MCF 10A (cell line): ENCODE measurements at regions of chr3 and their contacts with region 1.

Region 1: DNA sequence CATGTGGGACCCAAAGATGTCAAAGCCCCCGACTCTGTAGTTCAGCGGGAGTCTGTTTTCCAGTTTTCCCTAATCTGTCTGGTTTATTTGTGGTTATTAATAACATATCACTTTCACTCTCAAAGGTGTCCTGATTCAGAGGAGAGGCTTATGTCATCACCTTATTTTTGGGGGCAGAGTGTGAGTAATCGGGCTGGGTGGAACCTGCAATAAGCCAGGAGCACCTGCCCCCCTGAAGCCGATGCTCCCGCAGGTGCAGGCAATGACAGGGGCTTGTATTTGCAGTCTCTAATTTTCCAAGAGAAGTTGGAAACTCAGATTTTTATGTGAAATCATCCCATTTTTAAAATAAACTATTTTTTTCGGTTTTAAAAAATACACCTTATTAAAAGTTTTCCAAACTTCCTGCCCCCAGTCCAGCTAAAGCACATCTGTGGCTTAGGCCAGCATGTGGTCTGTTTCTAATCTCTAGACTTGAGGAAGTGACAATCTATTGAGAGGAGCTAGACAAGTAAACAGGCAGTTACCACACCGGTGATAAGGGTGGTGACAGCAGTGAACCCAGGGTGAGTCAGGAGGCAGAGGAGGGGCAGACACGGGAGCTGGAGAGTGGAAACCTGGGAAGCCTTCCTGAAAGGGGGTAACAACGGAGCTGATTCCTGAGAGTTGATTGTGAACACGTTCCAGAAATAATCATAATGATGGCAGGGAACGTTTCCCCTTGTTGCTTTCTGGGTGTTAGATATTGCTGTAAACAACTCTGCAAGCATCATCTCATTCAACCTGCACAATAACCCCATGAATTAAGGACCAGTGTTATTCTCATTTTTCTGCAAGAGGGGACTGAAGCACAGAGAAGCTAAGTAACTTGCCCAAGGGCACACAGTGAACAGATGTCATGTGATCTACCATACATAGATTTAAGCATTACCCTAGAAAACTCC is 37.3 kb downstream of the BHLHE40 start:
- DNase-seq: peak; percentile 59
- H3K4me3 Mint-ChIP-seq: no peak overlapping the region
- H3K27ac Mint-ChIP-seq: peak overlapping the region; percentile 76
- H3K4me1 Mint-ChIP-seq: peaks cover 55% of the 10 kb centered on the region
- H3K27me3 Mint-ChIP-seq: no peaks in the 10 kb centered on the region
- CTCF ChIP-seq: no peak

Region 2: DNA sequence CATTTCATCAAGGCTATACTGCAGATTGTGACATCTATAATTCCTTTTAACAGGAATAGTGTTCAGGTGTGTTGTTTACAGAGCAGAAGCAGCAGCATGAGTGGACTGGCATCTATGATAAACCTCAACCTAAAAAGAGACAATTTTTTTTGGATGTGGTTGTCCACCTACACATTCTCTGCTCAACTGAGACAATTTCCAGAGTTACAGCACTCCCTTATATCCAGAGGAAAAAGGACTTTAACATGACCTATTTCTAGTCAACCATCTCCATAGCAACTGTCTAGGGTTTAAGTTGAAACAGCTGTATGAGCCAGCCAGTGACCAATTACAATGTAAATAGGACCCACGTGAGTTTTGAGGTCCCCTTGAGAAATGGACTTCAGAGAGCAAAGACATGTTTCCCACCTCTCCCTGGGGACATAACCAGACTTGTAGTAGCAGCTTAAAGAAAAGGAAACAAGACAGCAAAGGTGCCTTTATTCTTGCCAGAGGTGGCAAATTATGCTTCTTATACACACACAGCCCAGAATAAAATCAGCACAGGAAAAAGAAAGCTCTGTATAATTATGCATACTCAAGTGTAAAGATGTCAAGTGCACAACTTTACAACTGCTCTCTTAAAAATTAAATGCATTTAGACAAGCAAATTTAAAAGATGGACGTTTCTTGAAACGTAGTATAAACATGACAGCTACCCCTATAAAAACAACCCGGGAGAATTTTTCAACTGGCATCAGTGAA is 589.7 kb before region 1 on chr3:
- CTCF ChIA-PET with region 1: no interaction called
- POLR2A ChIA-PET with region 1: no interaction called
- intact Hi-C with region 1: no loop called
- DNase-seq: peak; percentile 82
- H3K4me3 Mint-ChIP-seq: no peak overlapping the region
- H3K27ac Mint-ChIP-seq: peak overlapping the region; percentile 82
- H3K4me1 Mint-ChIP-seq: peaks cover 22% of the 10 kb centered on the region
- H3K27me3 Mint-ChIP-seq: no peaks in the 10 kb centered on the region
- CTCF ChIP-seq: no peak

Region 3: GRCh38 chr3:4722103-4722502 is 294.4 kb before region 1 on chr3:
- CTCF ChIA-PET with region 1: interaction called, 13 read pairs
- POLR2A ChIA-PET with region 1: interaction called, 10 read pairs
- intact Hi-C with region 1: no loop called
- DNase-seq: peak; percentile 87
- H3K4me3 Mint-ChIP-seq: no peak overlapping the region
- H3K27ac Mint-ChIP-seq: no peak overlapping the region
- H3K4me1 Mint-ChIP-seq: peaks cover 18% of the 10 kb centered on the region
- H3K27me3 Mint-ChIP-seq: no peaks in the 10 kb centered on the region
- CTCF ChIP-seq: peak; percentile 59

Region 4: DNA sequence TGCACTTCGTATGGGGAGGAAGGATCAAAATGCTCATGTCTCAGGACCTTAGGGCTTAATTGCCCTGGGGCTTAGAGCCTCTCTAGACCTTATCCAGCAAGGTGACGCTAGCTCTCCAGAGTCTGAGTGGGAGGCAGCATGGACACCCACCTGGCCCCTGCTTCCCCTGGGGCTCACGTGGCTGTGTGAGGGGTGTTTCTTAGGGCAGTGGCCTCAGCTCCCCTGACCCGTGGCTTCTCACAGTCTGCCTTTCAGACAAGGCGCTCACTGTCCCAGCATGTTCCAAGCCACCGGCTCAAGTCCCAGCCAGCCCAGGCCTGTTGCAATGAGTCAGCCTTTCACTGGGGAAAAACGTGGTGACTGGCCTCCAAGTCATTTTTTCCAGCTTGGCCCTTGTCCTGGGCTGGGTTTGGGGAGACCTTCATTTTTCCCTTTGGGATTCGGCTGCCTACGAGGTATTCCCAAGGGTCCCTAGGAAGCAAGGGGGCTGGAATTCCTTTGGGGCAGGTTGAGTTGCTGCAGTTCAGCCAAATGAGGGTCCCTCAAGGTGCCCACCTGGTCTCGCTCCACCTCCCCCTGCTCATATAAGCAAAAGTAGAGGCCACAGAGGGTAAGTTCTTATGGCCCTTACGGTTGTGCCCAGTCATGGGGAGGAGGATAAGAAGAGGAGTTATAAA is 21.5 kb before region 1 on chr3:
- CTCF ChIA-PET with region 1: interaction called, 8 read pairs
- POLR2A ChIA-PET with region 1: interaction called, 27 read pairs
- intact Hi-C with region 1: loop called (anchors 1 kb)
- DNase-seq: peak; percentile 98
- H3K4me3 Mint-ChIP-seq: no peak overlapping the region
- H3K27ac Mint-ChIP-seq: peak overlapping the region; percentile 89
- H3K4me1 Mint-ChIP-seq: peaks cover 23% of the 10 kb centered on the region
- H3K27me3 Mint-ChIP-seq: no peaks in the 10 kb centered on the region
- CTCF ChIP-seq: no peak

Region 5: GRCh38 chr3:5136211-5136918 is 119.9 kb after region 1 on chr3:
- CTCF ChIA-PET with region 1: no interaction called
- POLR2A ChIA-PET with region 1: no interaction called
- intact Hi-C with region 1: no loop called
- DNase-seq: peak; percentile 66
- H3K4me3 Mint-ChIP-seq: peak overlapping the region; percentile 11
- H3K27ac Mint-ChIP-seq: peak overlapping the region; percentile 86
- H3K4me1 Mint-ChIP-seq: peaks cover 63% of the 10 kb centered on the region
- H3K27me3 Mint-ChIP-seq: no peaks in the 10 kb centered on the region
- CTCF ChIP-seq: peak; percentile 31